CD8-positive, alpha-beta T cell (primary cell): ENCODE measurements at regions of chr17 and their contacts with region 1.

Region 1: GRCh38 chr17:35479271-35479670 is 30.7 kb upstream of the SLFN13 start:
- DNase-seq: no peak
- ATAC-seq: no peak
- H3K4me3 ChIP-seq: no peak overlapping the region
- H3K4me3 Mint-ChIP-seq: no peak overlapping the region
- H3K27ac ChIP-seq: no peak overlapping the region
- H3K27ac Mint-ChIP-seq: no peak overlapping the region
- H3K4me1 ChIP-seq: peaks cover 8% of the 10 kb centered on the region
- H3K4me1 Mint-ChIP-seq: peaks cover 44% of the 10 kb centered on the region
- H3K27me3 ChIP-seq: no peaks in the 10 kb centered on the region
- H3K27me3 Mint-ChIP-seq: no peaks in the 10 kb centered on the region
- CTCF ChIP-seq: no peak

Region 2: DNA sequence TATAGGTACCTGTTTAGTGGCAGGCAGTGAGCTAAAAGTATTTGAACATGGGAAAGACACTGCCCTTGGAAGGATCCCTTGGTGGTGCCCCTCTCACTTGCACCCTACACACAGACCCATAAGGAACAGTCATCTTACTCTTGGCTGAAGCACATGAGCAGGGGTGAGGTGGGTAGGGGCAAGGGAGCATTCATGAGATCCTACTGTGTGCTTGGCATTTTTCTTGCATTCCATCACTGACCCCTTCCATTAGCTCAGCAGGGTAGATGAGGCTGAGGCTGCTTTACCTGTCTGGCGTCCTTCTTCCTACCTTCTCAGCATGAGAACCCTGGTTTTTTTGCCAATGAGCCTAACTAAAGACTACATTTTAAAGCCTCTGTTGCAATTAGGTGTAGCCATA is 566.3 kb before region 1 on chr17:
- CTCF ChIA-PET with region 1: no interaction called
- POLR2A ChIA-PET with region 1: no interaction called
- intact Hi-C with region 1: no loop called
- DNase-seq: no peak
- ATAC-seq: no peak
- H3K4me3 ChIP-seq: no peak overlapping the region
- H3K4me3 Mint-ChIP-seq: no peak overlapping the region
- H3K27ac ChIP-seq: no peak overlapping the region
- H3K27ac Mint-ChIP-seq: no peak overlapping the region
- H3K4me1 ChIP-seq: no peaks in the 10 kb centered on the region
- H3K4me1 Mint-ChIP-seq: no peaks in the 10 kb centered on the region
- H3K27me3 ChIP-seq: no peaks in the 10 kb centered on the region
- H3K27me3 Mint-ChIP-seq: no peaks in the 10 kb centered on the region
- CTCF ChIP-seq: no peak

Region 3: GRCh38 chr17:35368081-35368830 is 111.0 kb before region 1 on chr17:
- CTCF ChIA-PET with region 1: no interaction called
- POLR2A ChIA-PET with region 1: no interaction called
- intact Hi-C with region 1: loop called in 1 of 2 experiments (anchors 1 kb)
- DNase-seq: peak in 4 of 9 experiments; percentile 50 to 85 (median 61)
- ATAC-seq: peak; percentile 96
- H3K4me3 ChIP-seq: peak overlapping the region in 1 of 2 experiments; percentile 31
- H3K4me3 Mint-ChIP-seq: peak overlapping the region; percentile 56
- H3K27ac ChIP-seq: peak overlapping the region in 1 of 2 experiments; percentile 58
- H3K27ac Mint-ChIP-seq: peak overlapping the region; percentile 86
- H3K4me1 ChIP-seq: peaks cover 30% of the 10 kb centered on the region
- H3K4me1 Mint-ChIP-seq: peaks cover 65% of the 10 kb centered on the region
- H3K27me3 ChIP-seq: no peaks in the 10 kb centered on the region
- H3K27me3 Mint-ChIP-seq: no peaks in the 10 kb centered on the region
- CTCF ChIP-seq: no peak

Region 4: DNA sequence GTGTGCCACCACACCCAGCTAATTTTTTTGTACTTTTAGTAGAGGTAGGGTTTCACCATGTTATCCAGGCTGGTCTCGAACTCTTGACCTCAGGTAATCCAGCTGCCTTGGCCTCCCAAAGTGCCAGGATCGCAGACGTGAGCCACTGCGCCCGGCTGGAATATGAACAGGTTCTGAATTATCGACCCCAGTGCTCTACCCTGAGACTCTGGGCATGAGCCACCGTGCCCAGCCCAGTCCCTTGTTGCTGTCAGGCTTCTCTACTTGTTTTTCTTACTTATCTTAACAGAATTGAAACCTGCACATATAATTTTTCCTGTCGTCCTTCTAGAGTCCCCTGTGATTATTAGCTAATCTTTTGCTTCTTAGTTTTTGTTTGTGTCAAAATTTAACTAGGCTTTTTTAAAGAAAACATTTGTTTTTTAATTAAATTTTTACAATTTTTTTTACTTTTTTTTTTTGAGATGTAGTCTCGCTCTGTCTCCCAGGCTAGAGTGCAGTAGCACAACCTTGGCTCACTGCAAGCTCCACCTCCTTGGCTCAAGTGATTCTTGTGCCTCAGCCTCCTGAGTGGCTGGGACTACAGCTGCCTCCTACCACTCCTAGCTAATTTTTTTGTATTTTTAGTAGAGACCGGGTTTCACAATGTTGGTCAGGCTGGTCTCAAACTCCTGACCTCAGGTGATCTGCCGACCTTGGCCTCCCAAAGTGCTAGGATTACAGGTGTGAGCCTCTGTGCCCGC is 174.5 kb after region 1 on chr17:
- CTCF ChIA-PET with region 1: no interaction called
- POLR2A ChIA-PET with region 1: no interaction called
- intact Hi-C with region 1: no loop called
- DNase-seq: no peak
- ATAC-seq: no peak
- H3K4me3 ChIP-seq: no peak overlapping the region
- H3K4me3 Mint-ChIP-seq: no peak overlapping the region
- H3K27ac ChIP-seq: no peak overlapping the region
- H3K27ac Mint-ChIP-seq: no peak overlapping the region
- H3K4me1 ChIP-seq: no peaks in the 10 kb centered on the region
- H3K4me1 Mint-ChIP-seq: peaks cover 2% of the 10 kb centered on the region
- H3K27me3 ChIP-seq: no peaks in the 10 kb centered on the region
- H3K27me3 Mint-ChIP-seq: no peaks in the 10 kb centered on the region
- CTCF ChIP-seq: no peak